Naive thymus-derived CD4-positive, alpha-beta T cell (primary cell): ENCODE measurements at regions of chr18 and their contacts with region 1.

Region 1: GRCh38 chr18:45993389-45993788 is 26.3 kb upstream of the EPG5 start:
- DNase-seq: no peak
- ATAC-seq: no peak
- H3K4me3 ChIP-seq: no peak overlapping the region
- H3K4me3 Mint-ChIP-seq: no peak overlapping the region
- H3K27ac ChIP-seq: no peak overlapping the region
- H3K27ac Mint-ChIP-seq: no peak overlapping the region
- H3K4me1 ChIP-seq: peaks cover 0 to 19% of the 10 kb centered on the region in 2 donors
- H3K4me1 Mint-ChIP-seq: peaks cover 9 to 29% (median 25%) of the 10 kb centered on the region in 7 donors
- H3K27me3 ChIP-seq: no peaks in the 10 kb centered on the region
- H3K27me3 Mint-ChIP-seq: no peaks in the 10 kb centered on the region

Region 2: DNA sequence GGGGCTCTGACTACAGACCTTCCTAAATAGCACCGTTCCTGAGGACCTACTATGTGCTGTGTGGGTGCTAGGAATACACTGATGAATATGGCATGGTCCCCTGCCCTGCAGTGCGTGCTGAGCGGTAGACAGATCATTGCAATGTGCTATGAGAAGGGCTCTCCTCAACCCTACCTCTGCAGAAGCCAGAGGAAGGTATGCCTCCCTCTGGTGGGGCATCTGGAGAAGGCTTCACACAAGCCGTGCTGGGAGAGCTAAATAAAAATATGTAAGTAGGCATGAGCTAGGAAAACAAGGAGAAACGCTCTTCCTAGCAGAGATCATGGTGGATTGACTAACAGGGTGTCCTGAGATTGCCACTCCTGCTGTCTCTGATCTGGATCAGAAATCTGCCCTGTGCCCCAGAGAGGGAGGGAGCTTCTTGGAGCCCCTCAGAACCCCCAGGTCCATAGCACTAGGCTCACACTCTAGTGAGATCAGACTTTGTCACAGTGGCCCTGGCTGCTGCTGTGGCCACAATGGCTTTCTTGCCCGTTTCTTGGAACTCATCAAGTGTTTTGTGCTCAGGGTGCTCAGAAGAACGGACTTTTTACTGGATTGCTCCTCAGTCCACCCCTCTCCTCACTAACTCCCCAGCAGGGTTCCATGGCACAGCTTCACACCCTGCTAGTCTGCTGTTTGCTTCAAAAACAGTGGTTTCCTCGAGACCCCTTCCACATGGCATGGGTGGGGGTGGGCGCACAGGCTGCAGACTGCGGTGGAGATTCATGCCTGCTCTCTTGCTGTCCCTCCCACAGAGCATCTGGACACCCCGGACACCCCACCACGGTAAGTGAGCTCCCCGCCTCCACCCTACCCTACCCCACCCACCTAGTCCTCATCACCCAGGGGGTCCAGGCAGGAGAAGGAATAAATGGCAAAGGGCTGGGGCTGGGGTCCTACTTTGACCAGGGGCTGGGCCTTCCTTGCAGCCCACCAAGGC is 153.7 kb before region 1 on chr18:
- CTCF ChIA-PET with region 1: no interaction called
- POLR2A ChIA-PET with region 1: interaction called, 10 read pairs
- intact Hi-C with region 1: no loop called
- DNase-seq: peak in 4 of 9 donors; percentile 20 to 36 (median 34)
- ATAC-seq: peak; percentile 62
- H3K4me3 ChIP-seq: no peak overlapping the region
- H3K4me3 Mint-ChIP-seq: peak overlapping the region in 5 of 10 donors; percentile 32 to 48 (median 36)
- H3K27ac ChIP-seq: no peak overlapping the region
- H3K27ac Mint-ChIP-seq: no peak overlapping the region
- H3K4me1 ChIP-seq: no peaks in the 10 kb centered on the region
- H3K4me1 Mint-ChIP-seq: peaks cover 5 to 21% (median 10%) of the 10 kb centered on the region in 7 donors
- H3K27me3 ChIP-seq: peaks cover 0 to 4% of the 10 kb centered on the region in 2 donors
- H3K27me3 Mint-ChIP-seq: peaks cover 30 to 56% (median 40%) of the 10 kb centered on the region in 5 donors

Region 3: GRCh38 chr18:46028536-46028891 is 35.1 kb after region 1 on chr18:
- CTCF ChIA-PET with region 1: no interaction called
- POLR2A ChIA-PET with region 1: interaction called, 4 read pairs
- intact Hi-C with region 1: loop called in 1 of 2 experiments (anchors 1 kb)
- DNase-seq: no peak
- ATAC-seq: no peak
- H3K4me3 ChIP-seq: peak overlapping the region; percentile 89
- H3K4me3 Mint-ChIP-seq: peak overlapping the region; percentile 80 to 96 (median 92)
- H3K27ac ChIP-seq: peak overlapping the region; percentile 54
- H3K27ac Mint-ChIP-seq: peak overlapping the region in 8 of 9 donors; percentile 25 to 86 (median 76)
- H3K4me1 ChIP-seq: peaks cover 0 to 5% of the 10 kb centered on the region in 2 donors
- H3K4me1 Mint-ChIP-seq: peaks cover 7 to 14% (median 13%) of the 10 kb centered on the region in 7 donors
- H3K27me3 ChIP-seq: no peaks in the 10 kb centered on the region
- H3K27me3 Mint-ChIP-seq: peaks cover 0 to 14% (median 0%) of the 10 kb centered on the region in 5 donors

Region 4: GRCh38 chr18:46042571-46043123 is 49.3 kb after region 1 on chr18:
- CTCF ChIA-PET with region 1: no interaction called
- POLR2A ChIA-PET with region 1: interaction called, 3 read pairs
- intact Hi-C with region 1: loop called (anchors 5 kb)
- DNase-seq: no peak
- ATAC-seq: no peak
- H3K4me3 ChIP-seq: no peak overlapping the region
- H3K4me3 Mint-ChIP-seq: peak overlapping the region; percentile 27 to 82 (median 58)
- H3K27ac ChIP-seq: no peak overlapping the region
- H3K27ac Mint-ChIP-seq: peak overlapping the region; percentile 44 to 89 (median 75)
- H3K4me1 ChIP-seq: peaks cover 24 to 40% of the 10 kb centered on the region in 2 donors
- H3K4me1 Mint-ChIP-seq: peaks cover 29 to 62% (median 55%) of the 10 kb centered on the region in 7 donors
- H3K27me3 ChIP-seq: no peaks in the 10 kb centered on the region
- H3K27me3 Mint-ChIP-seq: no peaks in the 10 kb centered on the region

Region 5: DNA sequence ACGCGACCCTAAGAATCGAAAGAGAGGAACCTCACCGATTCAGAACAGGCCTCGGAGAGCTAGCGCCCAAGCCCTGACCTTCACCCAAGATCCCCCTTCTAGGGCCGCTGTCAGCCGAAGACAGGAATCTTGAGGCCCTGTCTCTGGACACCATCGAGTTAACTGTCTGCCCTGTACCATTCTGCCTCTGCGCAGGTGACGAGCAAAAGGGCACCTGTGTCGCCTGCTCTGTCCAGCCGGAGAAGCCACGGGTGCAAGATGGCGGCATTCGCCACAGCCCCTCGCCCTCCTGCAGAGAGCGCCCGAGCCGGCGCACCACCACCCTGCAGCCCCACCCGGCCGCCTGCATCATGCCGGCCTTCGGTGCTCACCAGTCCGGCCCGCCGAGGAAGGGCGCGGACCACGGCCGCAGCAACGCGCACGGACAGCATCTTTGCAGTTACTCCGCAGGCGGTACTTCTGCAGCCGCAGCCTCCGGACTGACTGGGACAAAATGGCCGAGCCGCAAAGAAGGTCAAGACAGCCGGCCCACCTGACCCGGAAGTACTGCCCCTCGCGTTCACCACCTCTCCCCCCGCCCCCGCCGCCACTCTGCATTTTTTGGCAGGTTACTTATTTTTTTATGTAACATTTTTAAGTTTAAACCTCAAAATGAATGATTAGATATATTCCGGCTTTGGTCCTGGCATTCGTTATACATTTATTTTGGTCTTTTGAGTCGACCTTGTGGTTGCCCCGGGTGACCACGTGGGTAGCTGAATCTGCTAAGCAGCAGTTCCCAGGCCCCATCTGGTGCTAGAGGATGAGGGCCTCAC is 104.6 kb after region 1 on chr18 and contains the start of gene ATP5F1A:
- CTCF ChIA-PET with region 1: no interaction called
- POLR2A ChIA-PET with region 1: no interaction called
- intact Hi-C with region 1: loop called in 1 of 2 experiments (anchors 1 kb)
- DNase-seq: peak; percentile 69 to 86 (median 80)
- ATAC-seq: peak; percentile 94
- H3K4me3 ChIP-seq: peak within 1 kb of the TSS; percentile 92
- H3K4me3 Mint-ChIP-seq: peak within 1 kb of the TSS; percentile 92 to 99 (median 96)
- H3K27ac ChIP-seq: peak within 1 kb of the TSS; percentile 94
- H3K27ac Mint-ChIP-seq: peak within 1 kb of the TSS; percentile 94 to 99 (median 97)
- H3K4me1 ChIP-seq: peaks cover 18 to 32% of the 10 kb centered on the region in 2 donors
- H3K4me1 Mint-ChIP-seq: peaks cover 18 to 43% (median 35%) of the 10 kb centered on the region in 7 donors
- H3K27me3 ChIP-seq: no peaks in the 10 kb centered on the region
- H3K27me3 Mint-ChIP-seq: peaks cover 0 to 2% (median 0%) of the 10 kb centered on the region in 5 donors
- total RNA-seq, gene ATP5F1A: 181 to 311 (median 212) TPM